ENCODE measurements at regions of chr3 and their contacts with region 1.

Region 1: GRCh38 chr3:141729240-141729639 is 8.9 kb upstream of the RNF7 start:
- DNase-seq: no peak
- ATAC-seq: no peak
- H3K4me3 ChIP-seq: no peak overlapping the region
- H3K4me3 Mint-ChIP-seq: no peak overlapping the region
- H3K27ac ChIP-seq: no peak overlapping the region
- H3K27ac Mint-ChIP-seq: no peak overlapping the region
- H3K4me1 ChIP-seq: no peaks in the 10 kb centered on the region
- H3K4me1 Mint-ChIP-seq: no peaks in the 10 kb centered on the region
- H3K27me3 ChIP-seq: peaks cover 0 to 7% of the 10 kb centered on the region in 2 experiments
- H3K27me3 Mint-ChIP-seq: peaks cover 2 to 4% of the 10 kb centered on the region in 2 donors

Region 2: GRCh38 chr3:141625506-141625905 is 103.7 kb before region 1 on chr3:
- CTCF ChIA-PET with region 1: no interaction called
- POLR2A ChIA-PET with region 1: no interaction called
- DNase-seq: no peak
- ATAC-seq: no peak
- H3K4me3 ChIP-seq: no peak overlapping the region
- H3K4me3 Mint-ChIP-seq: no peak overlapping the region
- H3K27ac ChIP-seq: no peak overlapping the region
- H3K27ac Mint-ChIP-seq: no peak overlapping the region
- H3K4me1 ChIP-seq: no peaks in the 10 kb centered on the region
- H3K4me1 Mint-ChIP-seq: no peaks in the 10 kb centered on the region
- H3K27me3 ChIP-seq: no peaks in the 10 kb centered on the region
- H3K27me3 Mint-ChIP-seq: no peaks in the 10 kb centered on the region

Region 3: DNA sequence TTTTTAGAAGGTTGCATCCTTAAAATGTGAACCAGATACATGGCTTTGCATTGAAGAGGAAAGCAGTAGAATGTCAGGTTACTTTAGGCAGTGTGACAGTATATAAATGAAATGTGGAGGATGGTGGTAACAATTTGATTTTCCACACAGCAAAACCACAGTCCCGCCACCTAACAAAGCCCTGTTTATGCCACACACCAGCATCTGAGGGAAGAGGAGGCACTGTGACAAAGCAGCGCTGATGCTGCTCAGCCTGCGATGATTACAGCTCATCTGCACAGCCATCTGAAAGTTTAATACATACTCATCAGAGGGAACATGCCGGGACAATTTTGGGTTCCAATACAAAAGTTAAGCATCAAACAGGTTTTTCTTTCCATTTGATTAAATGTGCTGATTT is 17.7 kb after region 1 on chr3:
- CTCF ChIA-PET with region 1: no interaction called
- POLR2A ChIA-PET with region 1: no interaction called
- DNase-seq: no peak
- ATAC-seq: no peak
- H3K4me3 ChIP-seq: no peak overlapping the region
- H3K4me3 Mint-ChIP-seq: no peak overlapping the region
- H3K27ac ChIP-seq: no peak overlapping the region
- H3K27ac Mint-ChIP-seq: no peak overlapping the region
- H3K4me1 ChIP-seq: peaks cover 6 to 7% of the 10 kb centered on the region in 2 experiments
- H3K4me1 Mint-ChIP-seq: peaks cover 22 to 29% (median 28%) of the 10 kb centered on the region in 3 donors
- H3K27me3 ChIP-seq: no peaks in the 10 kb centered on the region
- H3K27me3 Mint-ChIP-seq: no peaks in the 10 kb centered on the region

Region 4: DNA sequence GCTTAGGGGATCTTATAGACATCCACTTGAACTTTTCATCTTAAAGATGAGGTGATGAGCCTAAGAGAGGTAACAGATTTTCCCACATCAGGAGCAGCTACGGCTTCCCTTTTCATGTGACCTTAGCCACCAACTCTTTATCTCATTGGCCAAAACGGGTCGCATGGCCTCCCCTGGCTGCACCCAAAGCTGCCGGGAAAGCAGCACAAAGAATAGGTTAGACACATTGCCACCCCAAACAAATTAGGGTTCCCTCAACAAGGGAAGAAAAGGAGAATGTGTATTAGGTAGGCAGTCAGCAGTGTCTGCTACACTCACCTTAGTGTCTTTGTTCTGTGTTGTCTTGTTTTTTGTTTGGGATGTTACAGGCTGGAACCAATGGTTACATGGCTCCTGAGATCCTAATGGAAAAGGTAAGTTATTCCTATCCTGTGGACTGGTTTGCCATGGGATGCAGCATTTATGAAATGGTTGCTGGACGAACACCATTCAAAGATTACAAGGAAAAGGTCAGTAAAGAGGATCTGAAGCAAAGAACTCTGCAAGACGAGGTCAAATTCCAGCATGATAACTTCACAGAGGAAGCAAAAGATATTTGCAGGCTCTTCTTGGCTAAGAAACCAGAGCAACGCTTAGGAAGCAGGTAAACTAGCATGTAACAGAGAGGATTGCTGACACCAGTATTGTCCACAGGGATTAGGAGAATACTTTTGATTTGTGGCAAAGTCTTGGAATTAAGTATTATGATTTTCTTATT is 78.2 kb after region 1 on chr3:
- CTCF ChIA-PET with region 1: no interaction called
- POLR2A ChIA-PET with region 1: interaction called in 1 of 2 experiments, 10 read pairs
- DNase-seq: no peak
- ATAC-seq: no peak
- H3K4me3 ChIP-seq: no peak overlapping the region
- H3K4me3 Mint-ChIP-seq: no peak overlapping the region
- H3K27ac ChIP-seq: no peak overlapping the region
- H3K27ac Mint-ChIP-seq: no peak overlapping the region
- H3K4me1 ChIP-seq: no peaks in the 10 kb centered on the region
- H3K4me1 Mint-ChIP-seq: no peaks in the 10 kb centered on the region
- H3K27me3 ChIP-seq: no peaks in the 10 kb centered on the region
- H3K27me3 Mint-ChIP-seq: peaks cover 0 to 1% of the 10 kb centered on the region in 2 donors

Region 5: DNA sequence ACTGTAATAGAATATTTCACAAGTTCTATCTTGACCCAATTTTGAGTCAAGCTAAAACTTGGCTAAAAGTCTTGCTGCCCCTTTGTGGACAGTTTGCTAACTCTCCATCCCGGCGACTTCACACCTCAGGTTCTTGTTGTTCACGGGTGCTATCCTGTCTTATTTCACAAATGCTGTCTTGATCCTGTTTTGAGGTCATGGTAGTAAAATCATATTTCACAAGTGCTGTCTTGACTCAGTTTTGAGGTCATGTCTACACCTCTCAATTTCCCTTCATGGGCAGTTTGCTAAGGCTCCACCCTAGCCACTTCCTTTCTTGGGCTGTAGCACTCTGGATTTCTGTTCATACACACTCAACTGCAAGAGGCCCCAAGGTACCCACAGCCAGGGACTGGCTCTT is 541.2 kb after region 1 on chr3:
- CTCF ChIA-PET with region 1: interaction called in 1 of 2 experiments, 10 read pairs
- POLR2A ChIA-PET with region 1: no interaction called
- DNase-seq: peak in 28 of 35 experiments; percentile 4 to 67 (median 20)
- ATAC-seq: peak; percentile 68 to 94 (median 80)
- H3K4me3 ChIP-seq: no peak overlapping the region
- H3K4me3 Mint-ChIP-seq: peak overlapping the region in 1 of 3 donors; percentile 45
- H3K27ac ChIP-seq: peak overlapping the region; percentile 40
- H3K27ac Mint-ChIP-seq: peak overlapping the region; percentile 40 to 72
- H3K4me1 ChIP-seq: peaks cover 0 to 23% of the 10 kb centered on the region in 2 experiments
- H3K4me1 Mint-ChIP-seq: peaks cover 7 to 28% (median 21%) of the 10 kb centered on the region in 3 donors
- H3K27me3 ChIP-seq: no peaks in the 10 kb centered on the region
- H3K27me3 Mint-ChIP-seq: no peaks in the 10 kb centered on the region

Measured in T-cell (primary cell).